Left colon (tissue), 2 donors: ENCODE measurements at regions of chr18 and their contacts with region 1.

Region 1: GRCh38 chr18:58768293-58768974 is 96.2 kb upstream of the ZNF532 start:
- DNase-seq: peak; percentile 45 to 85
- ATAC-seq: peak; percentile 92

Region 2: DNA sequence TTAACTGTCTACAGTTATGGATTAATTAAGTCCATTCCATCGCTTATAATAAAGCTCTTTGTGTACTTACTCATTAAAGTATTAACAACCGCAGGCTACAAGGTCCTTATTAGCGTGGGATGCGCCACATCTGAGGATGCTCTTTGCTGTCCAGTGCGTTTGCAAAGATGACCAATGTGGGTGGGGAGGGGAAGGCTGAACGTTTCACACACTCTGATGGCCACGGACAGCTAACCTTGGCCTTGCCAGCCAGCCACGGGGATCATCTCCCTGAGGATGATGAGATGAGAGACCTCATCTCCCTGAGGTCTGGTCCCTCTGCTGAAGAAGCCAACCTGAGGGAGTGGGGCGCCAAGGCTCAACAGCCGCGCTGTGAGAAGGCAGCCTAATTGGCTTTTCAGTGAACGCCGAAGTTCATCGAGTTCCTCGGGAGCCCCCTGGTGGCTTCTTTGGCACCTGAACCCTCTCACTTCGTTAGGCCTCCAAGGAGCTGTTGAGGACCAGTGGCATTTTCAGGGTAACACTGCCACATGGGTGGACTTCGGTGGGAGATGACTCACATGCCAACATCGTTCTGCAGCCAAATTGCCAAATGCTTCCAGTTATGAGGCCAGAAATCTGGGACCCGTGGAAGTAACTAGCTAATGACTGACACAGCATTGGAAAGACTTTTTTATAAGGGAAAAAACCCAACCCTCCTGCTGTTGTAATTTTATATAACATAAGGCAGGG is 301.9 kb after region 1 on chr18:
- intact Hi-C with region 1: loop called in 1 of 2 experiments (anchors 5 kb)
- DNase-seq: peak; percentile 66 to 92
- ATAC-seq: peak; percentile 88